Activated CD4-positive, alpha-beta memory T cell treated with anti-CD3 and anti-CD28 coated beads, Interleukin-2, amount 10 ng/mL, durations not matched to agents 7 days and 5 days (primary cell): ENCODE measurements at regions of chr5 and their contacts with region 1.

Region 1: DNA sequence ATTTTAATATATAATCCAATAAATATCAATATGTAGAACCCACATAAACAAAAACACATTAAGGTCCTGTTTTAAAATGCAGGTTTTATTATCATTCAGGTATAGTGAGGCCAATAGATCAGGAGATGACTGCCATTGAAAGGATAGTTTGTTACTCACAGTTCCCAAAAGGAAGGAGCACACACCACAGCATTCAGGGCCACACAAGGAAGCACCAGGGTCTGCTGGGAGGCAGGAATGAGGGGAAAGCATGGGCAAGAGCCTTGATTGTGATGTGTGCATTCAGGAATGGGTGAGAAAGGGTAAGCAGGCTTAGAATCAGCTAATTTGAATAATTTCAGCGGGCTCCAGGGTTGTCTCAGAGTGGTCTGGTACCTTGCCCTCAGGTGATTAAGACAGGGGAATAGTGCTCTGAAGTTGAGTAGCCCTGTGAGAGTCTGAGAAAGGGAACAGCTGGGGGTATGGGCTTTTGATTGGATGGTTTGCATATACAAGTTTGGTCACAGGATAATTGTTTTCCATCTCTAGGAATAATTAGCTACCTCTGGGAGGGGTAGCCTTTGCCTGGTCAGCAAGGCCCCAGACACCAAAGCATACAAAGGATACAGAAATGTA is 19.8 kb upstream of the OTULIN start:
- DNase-seq: no peak
- H3K4me3 Mint-ChIP-seq: no peak overlapping the region
- H3K27ac Mint-ChIP-seq: no peak overlapping the region
- H3K4me1 Mint-ChIP-seq: peaks cover 7% of the 10 kb centered on the region
- H3K27me3 Mint-ChIP-seq: peaks cover 36% of the 10 kb centered on the region

Region 2: GRCh38 chr5:14364576-14365472 is 279.9 kb before region 1 on chr5:
- CTCF ChIA-PET with region 1: interaction called, 214 read pairs
- POLR2A ChIA-PET with region 1: interaction called, 16 read pairs
- DNase-seq: peak; percentile 24
- H3K4me3 Mint-ChIP-seq: no peak overlapping the region
- H3K27ac Mint-ChIP-seq: peak overlapping the region; percentile 59
- H3K4me1 Mint-ChIP-seq: peaks cover 51% of the 10 kb centered on the region
- H3K27me3 Mint-ChIP-seq: peaks cover 2% of the 10 kb centered on the region

Region 3: GRCh38 chr5:14399054-14399692 is 245.6 kb before region 1 on chr5:
- CTCF ChIA-PET with region 1: interaction called, 54 read pairs
- POLR2A ChIA-PET with region 1: no interaction called
- DNase-seq: no peak
- H3K4me3 Mint-ChIP-seq: no peak overlapping the region
- H3K27ac Mint-ChIP-seq: no peak overlapping the region
- H3K4me1 Mint-ChIP-seq: peaks cover 30% of the 10 kb centered on the region
- H3K27me3 Mint-ChIP-seq: peaks cover 16% of the 10 kb centered on the region

Region 4: DNA sequence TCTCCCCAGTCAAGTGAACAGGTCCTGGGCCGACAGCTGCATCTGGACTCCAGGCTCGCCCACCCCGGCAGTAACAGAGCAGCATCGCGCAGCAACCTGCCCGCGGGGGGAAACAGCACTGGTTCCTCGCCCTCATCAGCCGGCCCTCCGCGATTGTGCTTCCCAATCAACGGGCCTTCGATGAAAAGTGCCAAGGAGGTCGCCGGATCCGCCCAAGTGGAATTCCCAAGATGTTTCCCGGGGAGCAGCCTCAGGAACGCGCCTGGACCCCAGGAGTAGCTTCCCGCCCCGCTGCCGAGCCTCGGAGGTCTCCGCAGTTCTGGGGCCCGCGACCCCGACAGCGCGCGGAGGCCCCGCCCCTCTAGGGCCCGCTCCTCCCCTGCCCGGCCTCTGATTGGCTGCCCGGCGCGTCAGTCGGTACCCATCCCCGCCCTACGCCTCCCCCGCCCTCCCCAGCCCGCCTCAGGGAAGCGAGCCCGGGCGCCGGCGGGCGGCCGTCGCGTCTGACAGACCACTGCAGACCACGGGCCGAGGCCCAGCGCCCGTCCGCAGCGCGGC is 63.3 kb before region 1 on chr5 and contains the start of gene OTULINL:
- CTCF ChIA-PET with region 1: interaction called, 13 read pairs
- POLR2A ChIA-PET with region 1: interaction called, 11 read pairs
- DNase-seq: peak; percentile 88
- H3K4me3 Mint-ChIP-seq: peak within 1 kb of the TSS; percentile 79
- H3K27ac Mint-ChIP-seq: peak within 1 kb of the TSS; percentile 73
- H3K4me1 Mint-ChIP-seq: peaks cover 31% of the 10 kb centered on the region
- H3K27me3 Mint-ChIP-seq: peaks cover 19% of the 10 kb centered on the region
- total RNA-seq, gene OTULINL: 31.1 to 34.6 TPM

Region 5: GRCh38 chr5:14615344-14615743 is 29.4 kb before region 1 on chr5:
- CTCF ChIA-PET with region 1: interaction called, 12 read pairs
- POLR2A ChIA-PET with region 1: no interaction called
- DNase-seq: no peak
- H3K4me3 Mint-ChIP-seq: no peak overlapping the region
- H3K27ac Mint-ChIP-seq: no peak overlapping the region
- H3K4me1 Mint-ChIP-seq: no peaks in the 10 kb centered on the region
- H3K27me3 Mint-ChIP-seq: no peaks in the 10 kb centered on the region

Region 6: DNA sequence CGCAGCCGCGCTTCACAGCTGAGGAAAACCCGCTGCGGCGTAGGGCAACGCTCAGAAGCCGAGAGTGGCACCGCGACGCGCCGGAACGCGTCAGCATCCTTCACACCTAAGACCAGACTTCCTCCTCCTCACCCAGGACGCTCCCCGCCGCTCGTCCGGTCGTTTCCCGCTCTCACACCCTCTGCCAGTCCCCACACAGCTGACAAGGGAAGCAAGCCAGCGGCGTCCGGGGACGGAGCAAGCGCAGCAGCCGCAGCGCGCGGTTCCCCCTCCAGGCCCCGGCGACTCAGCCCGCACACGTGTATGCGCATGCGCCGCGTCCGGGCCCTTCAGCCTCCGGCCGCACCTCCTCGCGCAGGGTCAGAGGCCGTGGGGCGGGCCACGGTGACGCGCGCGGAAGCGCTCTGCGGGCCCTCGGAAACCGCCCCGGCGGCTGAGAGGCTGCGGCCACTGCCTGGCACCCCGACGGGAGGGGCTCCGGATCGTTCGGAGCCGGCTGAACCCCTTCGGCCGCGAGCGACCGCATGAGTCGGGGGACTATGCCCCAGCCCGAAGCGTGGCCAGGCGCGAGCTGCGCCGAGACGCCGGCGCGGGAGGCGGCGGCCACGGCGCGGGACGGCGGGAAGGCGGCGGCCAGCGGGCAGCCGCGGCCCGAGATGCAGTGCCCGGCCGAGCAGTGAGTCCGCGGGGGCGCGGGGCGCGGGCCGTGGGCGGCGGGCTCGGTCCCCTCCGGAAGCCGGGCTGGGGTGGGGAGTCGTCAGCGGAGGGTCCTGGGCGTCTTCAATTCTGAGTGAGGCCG is 19.8 kb after region 1 on chr5 and contains the start of gene OTULIN:
- CTCF ChIA-PET with region 1: interaction called, 17 read pairs
- POLR2A ChIA-PET with region 1: no interaction called
- DNase-seq: peak; percentile 93
- H3K4me3 Mint-ChIP-seq: peak within 1 kb of the TSS; percentile 88
- H3K27ac Mint-ChIP-seq: peak within 1 kb of the TSS; percentile 98
- H3K4me1 Mint-ChIP-seq: peaks cover 70% of the 10 kb centered on the region
- H3K27me3 Mint-ChIP-seq: no peaks in the 10 kb centered on the region
- total RNA-seq, gene OTULIN: 69.6 to 71.7 TPM